Activated CD4-positive, alpha-beta T cell treated with anti-CD3 and anti-CD28 coated beads, Interleukin-2, amount 10 ng/mL, durations not matched to agents 24 days and 14 days (primary cell): ENCODE measurements at regions of chr2 and their contacts with region 1.

Region 1: GRCh38 chr2:238670111-238670585 is 177.7 kb upstream of the TWIST2 start:
- DNase-seq: peak; percentile 52
- H3K4me3 Mint-ChIP-seq: no peak overlapping the region
- H3K27ac Mint-ChIP-seq: peak overlapping the region; percentile 4
- H3K4me1 Mint-ChIP-seq: peaks cover 3% of the 10 kb centered on the region
- H3K27me3 Mint-ChIP-seq: peaks cover 12% of the 10 kb centered on the region

Region 2: GRCh38 chr2:238582159-238582558 is 88.0 kb before region 1 on chr2:
- intact Hi-C with region 1: no loop called
- DNase-seq: no peak
- H3K4me3 Mint-ChIP-seq: no peak overlapping the region
- H3K27ac Mint-ChIP-seq: no peak overlapping the region
- H3K4me1 Mint-ChIP-seq: no peaks in the 10 kb centered on the region
- H3K27me3 Mint-ChIP-seq: peaks cover 8% of the 10 kb centered on the region

Region 3: DNA sequence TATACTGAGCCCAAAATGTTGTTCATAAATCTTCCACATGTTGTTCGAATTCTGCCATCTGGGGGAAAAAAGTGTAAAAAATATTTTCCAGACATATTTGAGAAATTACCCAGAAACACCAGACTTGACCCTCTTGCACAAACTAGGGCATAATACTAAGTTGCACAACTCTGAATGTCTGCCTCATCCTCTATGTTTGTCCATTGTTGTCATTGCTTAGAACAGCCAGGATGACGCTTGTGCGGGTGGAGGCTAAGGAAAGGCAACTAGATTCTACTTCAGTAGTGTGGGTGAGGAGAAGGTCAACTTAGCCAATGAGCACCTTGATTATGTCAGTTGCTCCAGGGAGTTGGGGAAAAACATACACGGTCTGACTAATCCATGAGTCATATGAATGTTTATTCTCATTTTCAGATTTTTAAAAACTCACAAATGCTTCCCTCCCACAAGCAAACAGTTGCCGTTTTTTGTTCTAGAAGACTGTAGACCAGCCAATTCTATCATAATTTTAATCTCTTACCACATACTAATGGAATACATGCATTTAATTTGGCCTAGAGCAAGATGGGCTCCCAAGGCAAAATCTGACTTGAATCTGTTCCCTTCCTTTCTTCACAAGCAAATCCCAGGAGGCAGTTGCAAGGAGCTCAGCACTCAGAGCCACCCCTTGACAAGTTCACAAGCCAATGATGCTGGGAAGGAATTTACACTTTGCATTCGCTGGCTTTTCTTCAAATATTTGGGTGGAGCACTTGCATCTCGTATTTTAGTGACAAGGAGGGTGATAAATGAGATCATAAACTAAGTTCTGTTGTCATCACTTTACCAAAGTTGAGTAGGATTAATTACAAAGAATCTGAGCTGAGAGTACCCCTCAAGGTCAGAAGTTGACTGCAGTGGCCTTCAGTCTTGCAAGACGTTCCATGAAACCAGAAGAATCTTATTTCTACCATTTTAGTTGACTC is 14.5 kb after region 1 on chr2:
- intact Hi-C with region 1: loop called (anchors 1 kb)
- DNase-seq: peak; percentile 58
- H3K4me3 Mint-ChIP-seq: no peak overlapping the region
- H3K27ac Mint-ChIP-seq: peak overlapping the region; percentile 57
- H3K4me1 Mint-ChIP-seq: peaks cover 15% of the 10 kb centered on the region
- H3K27me3 Mint-ChIP-seq: peaks cover 11% of the 10 kb centered on the region

Region 4: GRCh38 chr2:238803996-238804870 is 134.1 kb after region 1 on chr2:
- intact Hi-C with region 1: no loop called
- DNase-seq: no peak
- H3K4me3 Mint-ChIP-seq: no peak overlapping the region
- H3K27ac Mint-ChIP-seq: no peak overlapping the region
- H3K4me1 Mint-ChIP-seq: no peaks in the 10 kb centered on the region
- H3K27me3 Mint-ChIP-seq: peaks cover 4% of the 10 kb centered on the region